Left cardiac atrium (tissue), 4 donors: ENCODE measurements at regions of chr7 and their contacts with region 1.

Region 1: GRCh38 chr7:82443547-82444219 is at the start of gene CACNA2D1:
- DNase-seq: peak; percentile 91
- ATAC-seq: peak; percentile 95 to 97
- total RNA-seq, gene CACNA2D1: 29.5 to 39.8 TPM

Region 2: GRCh38 chr7:82057476-82057875 is 386.2 kb before region 1 on chr7:
- intact Hi-C with region 1: no loop called
- DNase-seq: no peak
- ATAC-seq: no peak

Region 3: DNA sequence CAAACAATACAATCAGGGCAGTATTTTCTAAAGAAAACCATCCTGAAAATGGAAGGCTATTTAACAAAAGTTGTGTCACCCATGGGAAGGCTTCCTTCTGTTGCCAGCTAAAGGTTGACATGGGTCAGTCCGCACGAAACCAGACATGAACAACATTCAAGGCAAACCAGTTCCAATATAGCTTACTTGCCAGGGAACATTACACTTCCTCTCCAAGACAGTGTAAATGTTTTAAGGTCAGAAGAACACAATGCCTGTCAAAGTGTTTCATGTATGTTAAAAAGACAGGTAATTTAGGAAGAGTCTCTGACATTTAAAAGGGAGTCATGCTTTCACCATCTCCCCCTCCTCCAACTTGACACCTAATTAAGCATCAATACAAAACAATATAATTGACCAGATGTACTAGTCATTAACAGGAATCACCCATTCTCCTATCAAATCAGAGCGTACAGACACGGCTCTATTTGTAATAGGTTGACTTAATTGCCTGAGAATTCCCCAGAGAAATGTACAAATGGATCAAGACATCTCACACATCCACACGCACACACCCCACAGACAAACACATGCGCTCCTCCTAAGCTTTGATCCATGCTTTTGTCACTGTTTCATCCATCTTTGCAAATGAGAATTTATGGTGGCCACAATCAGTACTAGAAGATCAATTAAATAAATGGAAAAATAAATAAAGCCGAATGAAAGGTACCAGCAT is 69.6 kb before region 1 on chr7:
- intact Hi-C with region 1: loop called in 1 of 2 experiments (anchors 10 kb)
- DNase-seq: no peak
- ATAC-seq: peak in 1 of 2 donors; percentile 27

Region 4: GRCh38 chr7:82572195-82572880 is 128.7 kb after region 1 on chr7:
- intact Hi-C with region 1: loop called in 1 of 2 experiments (anchors 5 kb)
- DNase-seq: peak; percentile 90
- ATAC-seq: peak; percentile 88 to 96